Posterior vena cava (tissue), 2 donors: ENCODE measurements at regions of chr17 and their contacts with region 1.

Region 1: DNA sequence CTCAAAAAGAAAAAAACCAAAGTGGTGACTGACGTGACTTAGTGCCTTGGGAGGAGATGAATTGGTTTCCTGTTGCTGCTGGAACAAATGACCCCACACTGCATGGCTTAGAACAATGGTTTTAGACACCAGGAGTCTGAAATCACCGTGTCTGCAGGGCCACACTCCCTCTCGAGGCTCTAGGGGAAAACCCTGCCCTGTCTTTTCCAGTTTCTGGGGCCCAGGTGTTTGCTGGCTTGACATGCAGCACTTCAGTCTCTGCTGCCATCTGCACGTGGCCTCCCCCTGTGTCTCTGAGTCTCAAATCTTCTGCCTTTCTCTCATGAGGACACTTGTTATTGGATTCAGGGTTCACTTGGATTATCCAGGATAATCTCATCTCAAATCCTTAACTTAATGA is 323.8 kb upstream of the TNRC6C start:
- DNase-seq: peak; percentile 10

Region 2: DNA sequence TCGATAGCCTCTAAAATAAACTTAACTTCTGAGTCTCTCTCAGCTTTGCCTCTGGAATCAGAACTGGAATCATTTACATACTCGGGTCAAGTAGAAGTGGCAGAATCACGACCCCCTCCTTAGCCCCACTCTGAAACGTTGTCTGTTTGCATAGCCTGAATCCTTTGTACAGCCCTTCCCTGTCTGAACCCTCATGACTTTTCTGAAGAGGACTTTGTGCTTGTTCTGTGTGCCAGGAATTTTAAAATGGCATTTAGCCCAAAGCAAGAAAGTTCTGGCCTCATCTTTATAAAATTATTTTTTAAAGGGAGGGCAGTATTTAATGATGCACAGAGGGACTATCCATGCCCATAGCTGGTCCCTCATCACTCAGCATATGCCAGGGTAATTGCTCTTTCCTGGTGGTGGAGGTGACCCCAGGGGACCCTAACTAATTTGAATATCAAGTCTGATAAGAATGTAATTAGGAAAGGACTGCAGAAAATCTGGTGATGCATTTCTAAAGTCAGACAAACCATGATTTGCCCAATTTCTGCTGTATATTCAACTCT is 18.9 kb before region 1 on chr17:
- intact Hi-C with region 1: loop called in 1 of 2 experiments (anchors 1 kb)
- DNase-seq: peak; percentile 2

Region 3: GRCh38 chr17:77666881-77667395 is 32.2 kb after region 1 on chr17:
- intact Hi-C with region 1: loop called in 1 of 2 experiments (anchors 1 kb)
- DNase-seq: no peak

Region 4: DNA sequence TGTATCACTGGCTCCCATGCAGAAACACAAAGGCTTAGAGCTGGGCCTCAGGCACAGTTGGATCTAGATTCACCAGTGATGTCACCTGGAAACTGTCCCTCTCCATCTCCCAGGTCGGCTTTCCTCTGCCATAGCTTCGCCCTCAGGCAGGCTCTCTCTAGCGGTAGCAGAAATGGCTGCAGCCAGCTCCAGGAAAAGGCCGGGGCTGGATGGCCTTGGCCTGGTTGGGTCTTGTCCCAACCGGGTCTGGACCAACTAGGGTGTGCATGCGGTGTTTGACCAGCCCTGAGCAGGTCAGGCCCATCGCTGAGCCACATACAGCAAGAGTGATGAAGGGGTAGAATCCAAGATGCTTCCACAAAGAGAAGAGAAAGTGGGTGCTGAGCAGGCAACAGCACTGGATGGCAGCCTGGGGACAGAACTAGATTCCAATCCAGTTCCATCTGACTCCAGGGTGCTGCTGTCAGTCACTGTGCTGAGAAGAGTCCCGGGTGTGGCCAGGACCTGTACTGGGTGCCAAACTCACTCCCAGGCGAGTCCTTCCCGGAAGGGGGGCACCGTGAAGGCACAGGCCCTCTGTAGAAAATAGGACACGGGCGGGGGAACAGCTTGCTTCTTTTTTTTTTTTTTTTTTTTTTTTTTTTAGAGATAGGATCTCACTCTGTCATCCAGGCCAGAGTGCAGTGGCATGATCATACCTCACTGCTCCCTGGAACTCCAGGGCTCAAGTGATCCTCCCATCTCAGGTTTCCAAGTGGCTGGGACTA is 673.3 kb after region 1 on chr17:
- intact Hi-C with region 1: loop called in 1 of 2 experiments (anchors 5 kb)
- DNase-seq: no peak